ENCODE measurements at regions of chr1 and their contacts with region 1.

Region 1: GRCh38 chr1:33472349-33472980 is at the start of gene ZSCAN20:
- DNase-seq: peak; percentile 88
- H3K4me3 ChIP-seq: peak within 1 kb of the TSS; percentile 91
- CTCF ChIP-seq: no peak

Region 2: DNA sequence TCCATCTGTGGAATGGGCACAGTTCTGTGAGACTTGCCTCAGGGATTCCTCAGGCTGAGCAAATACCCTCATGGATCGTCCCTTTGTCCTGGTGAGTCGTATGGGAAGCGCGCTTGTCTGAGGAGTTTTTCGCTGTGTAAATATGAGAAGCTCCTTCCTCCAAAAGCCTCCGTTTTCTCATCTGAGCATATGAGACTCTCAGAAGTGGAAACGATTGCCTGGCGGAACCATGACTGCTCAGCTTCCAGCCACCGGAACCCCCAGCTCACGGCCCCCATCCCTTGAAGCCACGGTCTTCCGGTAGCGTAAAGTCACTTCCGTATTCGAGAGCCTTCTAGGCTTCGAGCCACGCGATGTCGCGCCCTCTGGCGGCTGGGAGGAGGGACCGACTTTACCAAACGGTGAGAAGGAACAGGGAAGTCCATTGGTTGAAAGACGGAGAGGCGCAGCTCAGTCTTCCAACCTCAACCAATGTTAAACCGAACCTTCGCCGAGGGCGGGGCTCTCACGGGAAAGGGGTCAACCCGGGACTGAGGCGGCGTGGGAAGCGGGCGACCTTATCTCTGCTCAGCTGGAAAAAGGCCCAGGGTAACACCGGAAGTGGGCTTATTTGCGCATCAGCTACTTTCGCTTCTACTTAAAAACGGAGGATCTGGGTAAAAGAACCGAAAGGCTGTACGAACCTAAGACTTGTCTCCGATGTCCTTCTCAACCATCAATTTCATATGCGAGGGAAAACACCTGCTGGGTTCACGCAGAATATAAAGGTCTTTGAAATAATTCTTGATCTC is 345.3 kb before region 1 on chr1:
- CTCF ChIA-PET with region 1: interaction called, 13 read pairs
- POLR2A ChIA-PET with region 1: no interaction called
- DNase-seq: peak; percentile 96
- H3K4me3 ChIP-seq: peak overlapping the region; percentile 75
- CTCF ChIP-seq: peak; percentile 94

Region 3: GRCh38 chr1:33342041-33342723 is 130.3 kb before region 1 on chr1:
- CTCF ChIA-PET with region 1: interaction called, 15 read pairs
- POLR2A ChIA-PET with region 1: no interaction called
- DNase-seq: peak; percentile 91
- H3K4me3 ChIP-seq: peak overlapping the region; percentile 9; the same call in 1 of the 2 replicates
- CTCF ChIP-seq: no peak

Region 4: DNA sequence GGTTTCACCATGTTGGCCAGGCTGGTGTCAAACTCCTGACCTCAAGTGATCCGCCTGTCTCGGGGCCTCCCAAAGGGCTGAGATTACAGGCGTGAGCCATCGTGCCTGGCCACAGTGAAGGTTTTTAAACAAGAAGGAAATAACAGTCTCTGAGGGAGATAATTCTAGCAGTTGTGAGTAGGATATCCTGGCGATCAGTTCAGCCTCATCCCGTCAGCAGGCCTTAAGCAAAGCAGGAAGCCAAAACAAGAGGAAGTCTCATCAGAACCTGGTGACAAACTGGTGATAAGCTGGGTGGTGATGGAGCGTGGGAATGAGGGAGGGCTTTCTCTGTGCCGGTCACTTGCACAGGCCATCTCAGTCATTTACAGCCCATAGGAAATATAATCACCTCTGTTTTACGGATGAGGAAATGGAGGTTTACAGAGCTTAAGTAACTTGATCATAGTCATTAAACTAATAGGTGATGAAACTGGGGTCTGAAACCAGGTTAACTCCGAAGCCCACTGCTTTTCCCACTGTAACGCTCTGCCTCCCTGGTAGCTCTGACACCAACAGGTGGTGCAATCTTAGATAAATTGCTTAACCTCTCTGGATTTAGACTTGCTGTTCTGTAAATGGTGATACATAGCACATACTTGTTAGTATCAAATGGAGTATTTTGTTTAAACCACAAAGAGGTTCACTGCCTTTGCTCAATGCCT is 110.8 kb before region 1 on chr1:
- CTCF ChIA-PET with region 1: interaction called, 118 read pairs
- POLR2A ChIA-PET with region 1: no interaction called
- DNase-seq: no peak
- H3K4me3 ChIP-seq: no peak overlapping the region
- CTCF ChIP-seq: no peak

Region 5: DNA sequence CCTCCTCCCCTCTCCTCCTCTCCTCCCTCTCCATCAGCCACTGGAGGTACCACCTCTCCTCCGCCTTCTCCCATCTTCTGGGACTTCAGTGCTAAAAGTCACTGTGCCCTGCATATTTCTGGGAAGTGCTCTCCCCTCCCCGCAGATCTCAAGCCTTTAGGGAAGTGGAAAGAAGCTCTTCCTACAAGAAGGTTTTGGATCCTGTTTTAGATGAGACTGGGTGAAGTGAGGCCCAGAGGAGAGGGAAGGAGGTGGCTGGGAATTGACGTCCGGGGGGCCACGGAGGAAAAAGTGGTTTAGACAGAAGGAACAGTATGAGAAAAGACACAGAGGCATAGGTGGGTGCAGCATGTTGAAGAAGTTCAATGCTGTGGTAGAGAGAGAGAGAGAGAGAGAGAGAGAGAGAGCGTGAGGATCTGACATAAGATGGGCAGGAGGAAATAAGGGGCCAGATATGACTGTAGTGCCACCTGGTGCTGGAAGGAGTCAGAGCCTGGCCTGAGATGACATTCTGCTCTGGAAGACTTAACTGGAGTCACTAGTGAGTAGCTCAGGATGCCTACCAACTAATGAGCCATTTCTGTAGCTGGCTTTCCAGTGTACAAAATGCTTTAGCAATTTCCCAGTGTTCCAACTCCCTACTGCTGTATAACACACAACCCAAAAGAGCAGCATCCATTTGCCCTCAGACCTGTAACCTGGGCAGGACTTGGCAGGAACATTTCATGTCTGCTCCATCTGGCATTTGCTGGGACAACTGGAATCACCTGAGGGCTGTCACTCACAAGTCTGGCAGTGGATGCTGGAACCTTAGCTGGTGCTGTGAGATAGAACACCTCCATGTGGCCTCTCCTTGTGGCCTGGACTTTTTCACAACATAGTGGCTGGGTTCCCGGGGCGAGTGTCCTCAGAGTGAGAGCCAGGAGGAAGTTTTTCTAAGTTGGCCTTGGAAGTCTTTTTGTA is 16.6 kb before region 1 on chr1:
- CTCF ChIA-PET with region 1: interaction called, 61 read pairs
- POLR2A ChIA-PET with region 1: interaction called, 3 read pairs
- DNase-seq: peak; percentile 77
- H3K4me3 ChIP-seq: no peak overlapping the region
- CTCF ChIP-seq: peak; percentile 87

Region 6: GRCh38 chr1:33610864-33611455 is 138.5 kb after region 1 on chr1:
- CTCF ChIA-PET with region 1: interaction called, 26 read pairs
- POLR2A ChIA-PET with region 1: interaction called, 3 read pairs
- DNase-seq: no peak
- H3K4me3 ChIP-seq: no peak overlapping the region
- CTCF ChIP-seq: no peak

Measured in AG04449 (cell line).